Heart right ventricle (tissue), 16 donors: ENCODE measurements at regions of chr4 and their contacts with region 1.

Region 1: DNA sequence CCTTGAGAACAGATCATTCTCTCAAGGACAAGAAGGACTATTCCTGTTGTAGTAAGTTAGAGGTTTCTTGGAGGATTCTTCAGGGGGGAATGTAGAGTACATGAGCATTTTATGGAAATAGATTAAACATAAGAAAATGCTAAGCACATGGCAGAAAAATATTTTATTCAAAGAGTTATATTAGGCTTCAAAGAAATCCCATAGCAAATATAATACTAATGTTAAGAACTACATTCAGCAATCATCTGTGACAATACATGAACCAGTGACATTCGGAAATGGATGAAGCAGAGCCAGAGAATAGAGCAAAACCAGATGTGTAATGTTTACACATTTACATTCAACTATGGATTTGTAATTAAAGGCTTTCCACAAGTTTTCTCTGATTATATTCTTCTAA is 288.6 kb downstream of the NAF1 start:
- DNase-seq: no peak
- ATAC-seq: no peak
- H3K4me3 ChIP-seq: no peak overlapping the region
- H3K27ac ChIP-seq: no peak overlapping the region
- H3K4me1 ChIP-seq: no peaks in the 10 kb centered on the region
- H3K27me3 ChIP-seq: no peaks in the 10 kb centered on the region
- CTCF ChIP-seq: no peak

Region 2: GRCh38 chr4:161197912-161198311 is 1680.2 kb before region 1 on chr4:
- intact Hi-C with region 1: loop called in 1 of 10 experiments (anchors 5 kb)
- DNase-seq: no peak
- ATAC-seq: no peak
- H3K4me3 ChIP-seq: no peak overlapping the region
- H3K27ac ChIP-seq: no peak overlapping the region
- H3K4me1 ChIP-seq: no peaks in the 10 kb centered on the region
- H3K27me3 ChIP-seq: no peaks in the 10 kb centered on the region
- CTCF ChIP-seq: no peak

Region 3: GRCh38 chr4:162700815-162701361 is 177.2 kb before region 1 on chr4:
- intact Hi-C with region 1: no loop called
- DNase-seq: no peak
- ATAC-seq: no peak
- H3K4me3 ChIP-seq: no peak overlapping the region
- H3K27ac ChIP-seq: no peak overlapping the region
- H3K4me1 ChIP-seq: peaks cover 0 to 3% (median 0%) of the 10 kb centered on the region in 9 donors
- H3K27me3 ChIP-seq: no peaks in the 10 kb centered on the region
- CTCF ChIP-seq: no peak

Region 4: GRCh38 chr4:162943263-162943662 is 65.2 kb after region 1 on chr4:
- intact Hi-C with region 1: no loop called
- DNase-seq: no peak
- ATAC-seq: no peak
- H3K4me3 ChIP-seq: no peak overlapping the region
- H3K27ac ChIP-seq: no peak overlapping the region
- H3K4me1 ChIP-seq: no peaks in the 10 kb centered on the region
- H3K27me3 ChIP-seq: no peaks in the 10 kb centered on the region
- CTCF ChIP-seq: no peak

Region 5: GRCh38 chr4:163077611-163078128 is 199.6 kb after region 1 on chr4:
- intact Hi-C with region 1: no loop called
- DNase-seq: no peak
- ATAC-seq: no peak
- H3K4me3 ChIP-seq: no peak overlapping the region
- H3K27ac ChIP-seq: no peak overlapping the region
- H3K4me1 ChIP-seq: no peaks in the 10 kb centered on the region
- H3K27me3 ChIP-seq: no peaks in the 10 kb centered on the region
- CTCF ChIP-seq: no peak